Activated CD4-positive, alpha-beta T cell treated with anti-CD3 and anti-CD28 coated beads for 36 hours (primary cell): ENCODE measurements at regions of chr2 and their contacts with region 1.

Region 1: DNA sequence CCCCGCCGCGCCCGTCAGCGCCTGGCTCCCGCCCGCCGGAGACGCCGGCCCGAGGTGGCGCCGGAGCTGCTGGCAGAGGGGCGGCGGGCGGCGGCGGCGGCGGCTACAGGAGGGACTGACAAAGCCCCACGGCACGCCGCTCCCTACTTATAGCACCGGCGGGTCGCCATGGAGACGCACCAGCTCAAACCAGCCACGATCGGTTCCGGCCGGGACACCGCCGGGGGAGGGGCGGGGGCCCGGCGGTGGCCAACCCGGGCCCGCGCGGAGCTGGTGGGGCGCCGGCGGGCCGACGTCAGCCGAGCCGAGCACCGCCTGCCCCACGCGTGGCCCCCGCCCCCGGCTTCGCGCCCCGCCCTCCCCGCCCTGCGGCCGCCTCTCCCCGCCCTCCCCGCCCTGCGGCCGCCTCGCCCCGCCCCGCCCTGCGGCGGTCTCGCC is at the start of gene ODC1:
- DNase-seq: peak; percentile 97
- ATAC-seq: peak; percentile 74
- H3K4me3 Mint-ChIP-seq: peak within 1 kb of the TSS; percentile 85
- H3K27ac Mint-ChIP-seq: peak within 1 kb of the TSS; percentile 95
- H3K4me1 Mint-ChIP-seq: peaks cover 51% of the 10 kb centered on the region
- H3K27me3 Mint-ChIP-seq: no peaks in the 10 kb centered on the region
- total RNA-seq, gene ODC1: 158 to 170 TPM

Region 2: GRCh38 chr2:9423100-9423921 is 1024.9 kb before region 1 on chr2 and contains the starts of genes CPSF3 and ITGB1BP1:
- CTCF ChIA-PET with region 1: no interaction called
- POLR2A ChIA-PET with region 1: no interaction called
- intact Hi-C with region 1: loop called in 1 of 2 experiments (anchors 1 kb)
- DNase-seq: peak; percentile 99
- ATAC-seq: peak; percentile 89
- H3K4me3 Mint-ChIP-seq: no peak within 1 kb of the TSS
- H3K27ac Mint-ChIP-seq: peak within 1 kb of the TSS; percentile 94
- H3K4me1 Mint-ChIP-seq: peaks cover 36% of the 10 kb centered on the region
- H3K27me3 Mint-ChIP-seq: no peaks in the 10 kb centered on the region
- total RNA-seq, gene CPSF3: 72.3 to 103 TPM
- total RNA-seq, gene ITGB1BP1: 89.7 to 92.1 TPM

Region 3: DNA sequence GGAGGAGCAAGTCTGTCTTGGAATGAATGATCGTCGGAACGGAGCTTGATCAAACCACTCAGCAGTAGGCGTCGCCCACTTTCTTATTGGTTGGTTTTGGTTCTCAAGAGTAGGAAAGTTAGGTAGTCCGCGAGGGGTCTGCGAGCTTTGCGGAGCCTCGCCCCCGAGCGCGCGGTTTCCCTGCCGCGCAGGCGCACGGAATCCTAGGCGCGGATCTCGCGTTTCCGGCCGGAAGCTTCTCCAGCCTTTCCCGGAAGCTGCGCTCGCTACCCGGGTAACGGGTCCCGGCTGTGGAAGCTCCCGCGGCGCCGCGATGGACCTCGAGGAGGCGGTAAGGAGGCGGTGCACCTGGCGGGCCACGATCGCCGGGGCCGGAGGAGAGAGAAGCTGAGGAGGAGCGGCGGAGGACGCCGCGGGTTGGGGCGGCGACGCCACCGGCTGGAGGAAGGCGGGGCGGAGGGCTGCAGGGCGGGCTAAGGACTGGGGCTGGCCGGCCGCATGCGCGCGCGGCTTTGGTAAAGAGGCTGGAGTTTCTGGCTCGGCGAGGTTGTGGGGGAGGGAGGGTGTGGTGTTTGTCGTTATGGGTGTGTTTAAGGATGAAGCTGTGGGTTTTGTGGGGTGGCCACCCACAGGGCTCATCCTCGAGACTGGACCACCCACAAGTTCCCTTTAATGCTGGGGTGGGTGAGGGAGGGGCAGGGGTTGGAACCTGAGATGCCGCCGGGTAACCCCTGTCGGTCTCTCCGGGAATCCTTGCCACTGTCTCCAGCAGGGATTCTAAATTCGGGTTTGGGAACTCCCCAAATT is 604.8 kb before region 1 on chr2 and contains the start of gene TAF1B:
- CTCF ChIA-PET with region 1: no interaction called
- POLR2A ChIA-PET with region 1: no interaction called
- intact Hi-C with region 1: loop called in 1 of 2 experiments (anchors 1 kb)
- DNase-seq: peak; percentile 93
- ATAC-seq: peak; percentile 80
- H3K4me3 Mint-ChIP-seq: peak within 1 kb of the TSS; percentile 89
- H3K27ac Mint-ChIP-seq: peak within 1 kb of the TSS; percentile 85
- H3K4me1 Mint-ChIP-seq: peaks cover 37% of the 10 kb centered on the region
- H3K27me3 Mint-ChIP-seq: no peaks in the 10 kb centered on the region
- total RNA-seq, gene TAF1B: 28.7 to 28.8 TPM

Region 4: GRCh38 chr2:10122386-10123280 is 325.6 kb before region 1 on chr2 and contains the start of gene RRM2:
- CTCF ChIA-PET with region 1: interaction called, 4 read pairs
- POLR2A ChIA-PET with region 1: interaction called, 8 read pairs
- intact Hi-C with region 1: loop called (anchors 1 to 2 kb)
- DNase-seq: peak; percentile 98
- ATAC-seq: peak; percentile 82
- H3K4me3 Mint-ChIP-seq: peak within 1 kb of the TSS; percentile 97
- H3K27ac Mint-ChIP-seq: peak within 1 kb of the TSS; percentile 98
- H3K4me1 Mint-ChIP-seq: peaks cover 37% of the 10 kb centered on the region
- H3K27me3 Mint-ChIP-seq: no peaks in the 10 kb centered on the region
- total RNA-seq, gene RRM2: 382 to 469 TPM

Region 5: GRCh38 chr2:10204326-10205161 is 243.7 kb before region 1 on chr2:
- CTCF ChIA-PET with region 1: no interaction called
- POLR2A ChIA-PET with region 1: no interaction called
- intact Hi-C with region 1: no loop called
- DNase-seq: no peak
- ATAC-seq: no peak
- H3K4me3 Mint-ChIP-seq: no peak overlapping the region
- H3K27ac Mint-ChIP-seq: no peak overlapping the region
- H3K4me1 Mint-ChIP-seq: no peaks in the 10 kb centered on the region
- H3K27me3 Mint-ChIP-seq: no peaks in the 10 kb centered on the region

Region 6: GRCh38 chr2:10434886-10435819 is 13.1 kb before region 1 on chr2:
- CTCF ChIA-PET with region 1: interaction called, 15 read pairs
- POLR2A ChIA-PET with region 1: interaction called, 9 read pairs
- intact Hi-C with region 1: no loop called
- DNase-seq: peak; percentile 85
- ATAC-seq: peak; percentile 56
- H3K4me3 Mint-ChIP-seq: no peak overlapping the region
- H3K27ac Mint-ChIP-seq: no peak overlapping the region
- H3K4me1 Mint-ChIP-seq: peaks cover 11% of the 10 kb centered on the region
- H3K27me3 Mint-ChIP-seq: peaks cover 6% of the 10 kb centered on the region

Region 7: DNA sequence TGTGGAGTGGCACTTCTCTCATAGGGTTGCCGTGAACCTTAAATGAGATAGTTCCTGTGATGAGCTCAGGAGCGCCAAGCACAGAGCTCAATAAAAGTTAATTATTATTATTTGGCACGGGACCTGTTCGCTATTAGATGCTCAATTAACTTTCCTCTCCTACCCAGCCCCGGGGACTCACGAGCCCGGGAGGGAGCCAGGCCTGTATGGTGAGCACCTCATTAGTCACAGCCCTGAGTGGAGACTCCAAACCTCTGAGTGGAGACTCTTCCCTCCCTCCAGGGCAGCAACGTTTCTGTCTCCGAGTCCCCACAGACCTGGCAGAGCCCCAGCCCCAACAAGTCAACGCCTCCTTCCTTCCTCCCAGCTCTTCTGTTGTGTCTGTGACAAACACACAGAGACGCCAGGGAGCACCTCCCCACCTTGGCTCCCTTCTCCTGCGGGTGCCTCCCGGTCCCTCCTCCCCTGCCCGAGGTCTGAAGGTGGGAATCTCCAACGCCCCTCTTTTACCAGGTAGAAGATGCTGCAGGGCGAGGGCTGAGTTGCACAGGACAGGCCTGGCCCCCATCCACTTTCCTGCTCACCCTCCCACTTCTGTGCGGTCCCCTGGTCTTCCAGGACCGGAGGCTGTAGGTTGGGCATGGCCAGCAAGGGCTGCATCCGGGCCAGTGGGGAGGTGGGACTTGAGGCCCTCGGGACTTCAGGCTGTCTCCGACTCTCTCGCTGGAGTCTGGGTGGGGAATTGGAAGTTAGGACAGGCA is 52.6 kb after region 1 on chr2:
- CTCF ChIA-PET with region 1: no interaction called
- POLR2A ChIA-PET with region 1: no interaction called
- intact Hi-C with region 1: no loop called
- DNase-seq: no peak
- ATAC-seq: no peak
- H3K4me3 Mint-ChIP-seq: no peak overlapping the region
- H3K27ac Mint-ChIP-seq: no peak overlapping the region
- H3K4me1 Mint-ChIP-seq: peaks cover 7% of the 10 kb centered on the region
- H3K27me3 Mint-ChIP-seq: peaks cover 2% of the 10 kb centered on the region

Region 8: DNA sequence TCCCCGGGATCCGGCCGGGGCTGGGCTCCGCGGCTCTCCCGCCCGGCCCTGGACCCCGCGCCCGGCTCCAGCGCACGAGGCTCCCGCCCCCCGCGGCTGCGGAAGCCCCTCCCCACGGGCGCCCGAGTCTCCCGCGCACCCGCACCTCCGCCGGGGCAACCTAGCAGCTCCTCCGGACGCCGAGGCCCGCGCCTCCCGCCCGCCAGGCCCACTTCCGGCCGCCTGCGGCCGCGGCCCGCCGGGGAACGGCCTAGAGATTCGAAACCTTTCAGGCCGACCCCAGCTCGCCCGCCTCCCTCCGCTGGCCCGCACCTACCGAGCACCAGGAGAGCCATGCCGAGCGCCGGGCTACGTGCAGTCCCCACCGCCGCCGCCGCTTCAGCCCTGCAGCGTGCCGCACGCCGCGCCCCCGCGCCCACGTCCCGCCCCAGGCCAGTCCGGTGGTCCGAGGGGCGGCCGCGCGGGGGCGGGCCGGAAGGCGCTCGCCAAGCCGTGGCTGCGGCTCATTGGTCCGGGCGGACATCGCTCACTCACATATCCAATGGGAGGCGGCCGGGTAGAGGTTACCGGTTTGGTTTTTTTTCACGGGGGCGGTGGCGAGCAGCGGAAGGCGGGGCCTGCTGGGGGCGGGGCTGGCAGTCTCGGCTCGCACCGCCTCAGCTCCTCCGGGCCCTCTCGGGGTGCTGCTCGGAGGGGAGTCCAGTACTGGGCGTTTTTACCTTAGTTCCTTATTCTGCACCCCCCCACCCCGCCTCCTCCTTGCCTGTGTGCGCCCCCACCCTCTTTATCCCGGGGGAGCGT is 364.3 kb after region 1 on chr2 and contains the start of gene PDIA6:
- CTCF ChIA-PET with region 1: no interaction called
- POLR2A ChIA-PET with region 1: no interaction called
- intact Hi-C with region 1: loop called in 1 of 2 experiments (anchors 1 kb)
- DNase-seq: peak; percentile 97
- ATAC-seq: peak; percentile 94
- H3K4me3 Mint-ChIP-seq: peak within 1 kb of the TSS; percentile 89
- H3K27ac Mint-ChIP-seq: peak within 1 kb of the TSS; percentile 90
- H3K4me1 Mint-ChIP-seq: peaks cover 34% of the 10 kb centered on the region
- H3K27me3 Mint-ChIP-seq: peaks cover 1% of the 10 kb centered on the region
- total RNA-seq, gene PDIA6: 123 to 157 TPM